IMR-90 (cell line): ENCODE measurements at regions of chr11 and their contacts with region 1.

Region 1: DNA sequence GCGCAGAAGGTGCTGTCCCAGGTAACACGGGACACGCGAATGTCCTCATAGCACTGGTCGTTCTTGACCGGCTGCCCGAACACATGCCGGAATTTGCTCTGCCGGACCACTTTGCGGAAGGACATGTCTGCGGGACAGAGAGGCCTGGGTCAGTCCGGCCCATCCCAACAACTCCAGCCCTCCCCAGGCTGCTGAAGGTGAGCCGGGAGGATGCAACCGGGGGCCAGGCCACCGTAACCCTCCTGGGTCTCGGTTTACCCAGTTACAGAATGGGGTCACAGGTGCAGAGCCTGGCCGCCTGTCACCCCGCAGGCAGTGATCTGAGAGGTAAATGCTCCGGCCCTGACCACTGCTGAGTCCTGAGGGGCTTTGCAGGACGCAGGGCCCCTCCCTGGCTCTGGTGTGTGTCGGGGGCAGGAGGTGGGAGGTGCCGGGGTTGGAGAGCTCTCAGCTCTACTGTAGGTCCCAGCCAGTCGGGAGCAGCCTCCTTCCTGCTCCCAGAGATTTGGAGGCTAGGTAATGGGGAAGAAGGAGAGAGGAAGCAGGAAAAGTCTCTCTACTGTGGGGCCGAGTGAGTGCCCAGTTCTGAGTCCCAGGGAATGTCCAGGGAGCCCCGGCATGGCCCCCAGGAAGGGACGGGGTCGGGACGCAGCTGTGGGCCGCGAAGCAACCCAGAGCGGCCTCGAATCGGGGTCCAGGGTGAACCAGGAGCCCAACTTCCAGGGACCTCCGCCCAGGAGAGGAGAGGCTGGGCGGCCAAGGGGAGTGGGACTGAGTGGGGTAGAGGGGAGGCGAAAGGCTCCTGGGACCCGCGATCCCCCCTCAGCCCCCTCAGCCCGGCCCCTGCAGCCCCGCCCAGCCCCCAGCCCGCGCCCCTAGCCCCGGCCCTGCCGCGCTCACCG is 521 bp downstream of the CORO1B start:
- DNase-seq: no peak
- ATAC-seq: peak; percentile 27
- H3K4me3 ChIP-seq: peak overlapping the region; percentile 97
- H3K27ac ChIP-seq: peak overlapping the region; percentile 89
- H3K4me1 ChIP-seq: peaks cover 3% of the 10 kb centered on the region; the same call in 1 of the 2 replicates
- H3K27me3 ChIP-seq: no peaks in the 10 kb centered on the region
- CTCF ChIP-seq: no peak
- POLR2A ChIP-seq: no peak
- RAD21 ChIP-seq: no peak

Region 2: DNA sequence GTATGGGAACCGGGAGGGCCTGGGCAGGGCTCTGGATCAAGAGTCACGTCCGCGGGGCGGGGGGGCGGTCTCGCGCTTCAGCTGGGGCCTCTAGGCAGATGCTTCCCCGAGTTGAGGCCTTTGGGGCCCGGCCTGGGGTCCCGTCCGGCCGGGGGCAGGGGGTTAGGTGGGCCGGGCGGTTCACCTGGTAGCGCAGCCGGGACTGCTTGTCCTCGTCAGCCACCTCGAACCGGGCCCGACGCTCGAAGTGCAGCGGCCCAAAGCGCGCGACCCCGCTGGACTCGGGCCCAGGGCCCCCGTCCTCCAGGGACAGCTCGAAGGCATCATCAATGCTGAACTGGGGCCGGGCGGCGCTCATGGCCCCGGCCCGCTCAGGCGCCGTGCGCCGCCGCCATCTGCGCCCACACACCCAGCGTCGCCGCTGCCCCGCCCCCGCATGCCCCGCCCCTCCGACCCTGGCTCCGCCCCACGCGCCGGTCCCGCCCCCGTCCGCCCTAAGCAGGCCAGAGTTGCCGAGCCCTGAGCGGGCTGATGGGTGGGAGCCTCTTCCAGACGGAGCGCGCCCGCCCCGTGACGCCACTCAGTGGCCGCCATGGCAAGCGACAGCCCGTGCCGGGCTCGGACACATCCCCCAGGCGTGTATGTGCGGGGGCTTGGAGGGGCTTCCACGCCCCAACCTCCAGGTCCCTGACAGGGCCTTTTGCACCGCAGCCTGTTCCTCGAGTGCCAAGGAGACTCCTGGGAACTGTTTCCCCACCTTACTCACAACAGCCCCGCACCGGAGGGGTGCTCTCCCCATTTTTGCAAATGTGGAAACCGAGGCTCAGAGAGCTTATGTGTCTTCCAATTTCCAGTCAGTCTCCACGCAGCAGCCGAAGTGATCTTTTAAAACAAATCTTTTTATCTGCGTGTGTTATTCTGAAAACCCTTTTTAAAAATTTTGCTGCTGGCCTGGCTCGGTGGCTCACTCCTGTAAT is 26.4 kb after region 1 on chr11 and contains the start of gene TMEM134:
- CTCF ChIA-PET with region 1: interaction called, 4 read pairs
- POLR2A ChIA-PET with region 1: interaction called, 6 read pairs
- dilution Hi-C with region 1: no loop called
- in situ Hi-C with region 1: no loop called
- intact Hi-C with region 1: loop called (anchors 1 kb)
- DNase-seq: peak; percentile 87
- ATAC-seq: peak; percentile 96
- H3K4me3 ChIP-seq: peak within 1 kb of the TSS; percentile 87
- H3K27ac ChIP-seq: peak within 1 kb of the TSS; percentile 78
- H3K4me1 ChIP-seq: peaks cover 7% of the 10 kb centered on the region
- H3K27me3 ChIP-seq: peaks cover 3% of the 10 kb centered on the region; the same call in 1 of the 2 replicates
- CTCF ChIP-seq: peak; percentile 56
- POLR2A ChIP-seq: peak; percentile 79
- RAD21 ChIP-seq: peak; percentile 54
- total RNA-seq, gene TMEM134: 12.5 and 18.9 TPM in 2 replicates

Region 3: DNA sequence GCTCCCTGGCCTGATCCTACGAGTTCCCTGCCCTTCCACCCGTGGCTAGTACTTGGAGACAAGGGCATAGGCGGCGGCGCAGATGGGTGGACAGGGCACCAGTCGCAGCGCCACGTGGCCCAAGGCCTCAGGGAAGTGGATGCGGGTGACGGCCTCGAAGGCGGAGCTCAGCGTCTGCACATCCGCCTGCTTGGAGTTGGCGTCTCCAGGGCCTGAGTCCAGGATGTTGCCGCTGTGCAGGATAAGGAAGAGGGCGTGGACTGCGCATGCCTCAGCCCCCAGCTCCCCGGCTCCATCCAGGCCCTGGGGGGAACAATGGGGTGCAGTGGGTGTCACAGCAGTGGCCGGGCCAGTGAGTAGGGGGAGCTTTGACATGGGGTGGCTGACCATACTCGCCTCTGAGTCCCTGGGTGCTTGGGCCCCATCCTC is 55.8 kb after region 1 on chr11:
- CTCF ChIA-PET with region 1: no interaction called
- POLR2A ChIA-PET with region 1: no interaction called
- dilution Hi-C with region 1: no loop called
- in situ Hi-C with region 1: no loop called
- intact Hi-C with region 1: no loop called
- DNase-seq: no peak
- ATAC-seq: no peak
- H3K4me3 ChIP-seq: no peak overlapping the region
- H3K27ac ChIP-seq: no peak overlapping the region
- H3K4me1 ChIP-seq: no peaks in the 10 kb centered on the region
- H3K27me3 ChIP-seq: no peaks in the 10 kb centered on the region
- CTCF ChIP-seq: no peak
- POLR2A ChIP-seq: no peak
- RAD21 ChIP-seq: no peak